Transverse colon (tissue), 4 donors: ENCODE measurements at regions of chr1 and their contacts with region 1.

Region 1: GRCh38 chr1:116151739-116152576 is 40.8 kb downstream of the MAB21L3 start:
- DNase-seq: peak; percentile 82
- H3K4me3 ChIP-seq: peak overlapping the region in 3 of 4 donors; percentile 26 to 54 (median 34)
- H3K27ac ChIP-seq: peak overlapping the region; percentile 76 to 87 (median 82)
- H3K4me1 ChIP-seq: peaks cover 3 to 37% (median 24%) of the 10 kb centered on the region in 4 donors
- H3K27me3 ChIP-seq: no peaks in the 10 kb centered on the region
- CTCF ChIP-seq: peak; percentile 84 to 96 (median 95)
- EP300 ChIP-seq: no peak
- POLR2A ChIP-seq: peak; percentile 32

Region 2: GRCh38 chr1:116372587-116373444 is 220.9 kb after region 1 on chr1 and contains the start of gene ATP1A1:
- in situ Hi-C with region 1: loop called in 2 of 4 experiments (anchors 25 kb)
- intact Hi-C with region 1: no loop called
- DNase-seq: peak; percentile 99
- H3K4me3 ChIP-seq: peak within 1 kb of the TSS; percentile 95 to 99 (median 98)
- H3K27ac ChIP-seq: peak within 1 kb of the TSS; percentile 96 to 99 (median 98)
- H3K4me1 ChIP-seq: peaks cover 11 to 47% (median 43%) of the 10 kb centered on the region in 4 donors
- H3K27me3 ChIP-seq: no peaks in the 10 kb centered on the region
- CTCF ChIP-seq: peak in 1 of 5 experiments; percentile 42
- EP300 ChIP-seq: no peak
- POLR2A ChIP-seq: peak; percentile 95
- total RNA-seq, gene ATP1A1: 324 to 3,097 (median 1,990) TPM